B cell (primary cell): ENCODE measurements at regions of chr12 and their contacts with region 1.

Region 1: DNA sequence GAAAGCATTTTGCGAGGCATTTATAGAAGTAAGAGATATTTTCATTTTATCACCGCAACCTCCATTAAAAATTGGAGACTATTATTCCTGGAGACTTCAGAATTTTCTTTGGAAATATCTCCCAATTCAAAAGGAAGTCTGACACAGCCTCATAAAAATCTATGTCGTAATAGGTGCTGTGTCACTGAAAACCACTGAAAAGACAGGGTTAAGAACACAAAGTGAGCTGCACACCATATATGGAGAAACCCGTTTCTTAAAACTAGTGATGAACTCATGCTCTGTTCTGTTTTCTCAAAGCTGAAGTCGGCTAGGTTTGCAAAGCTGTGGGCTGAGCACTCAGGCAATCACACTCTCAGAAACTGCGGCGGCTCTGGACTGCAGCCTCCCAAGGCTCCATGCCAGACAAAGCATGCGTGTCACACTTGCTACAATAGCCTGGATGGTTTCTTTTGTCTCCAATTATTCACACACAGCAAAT is at the start of gene GLIPR1:
- DNase-seq: peak; percentile 79
- ATAC-seq: peak; percentile 82
- H3K4me3 ChIP-seq: peak within 1 kb of the TSS; percentile 66 to 98 (median 80)
- H3K4me3 Mint-ChIP-seq: peak within 1 kb of the TSS; percentile 98
- H3K27ac ChIP-seq: peak within 1 kb of the TSS; percentile 75 to 79
- H3K27ac Mint-ChIP-seq: peak within 1 kb of the TSS; percentile 99
- H3K4me1 ChIP-seq: peaks cover 61 to 64% of the 10 kb centered on the region in 2 donors
- H3K4me1 Mint-ChIP-seq: peaks cover 79% of the 10 kb centered on the region
- H3K27me3 ChIP-seq: no peaks in the 10 kb centered on the region
- H3K27me3 Mint-ChIP-seq: no peaks in the 10 kb centered on the region
- CTCF ChIP-seq: no peak
- total RNA-seq, gene GLIPR1: 117 and 119 TPM in 2 replicates

Region 2: GRCh38 chr12:75334384-75335030 is 146.0 kb before region 1 on chr12 and contains the start of gene GLIPR1L1:
- CTCF ChIA-PET with region 1: interaction called, 29 read pairs
- POLR2A ChIA-PET with region 1: no interaction called
- intact Hi-C with region 1: loop called (anchors 5 kb)
- DNase-seq: peak; percentile 86
- ATAC-seq: peak; percentile 83
- H3K4me3 ChIP-seq: peak within 1 kb of the TSS in 2 of 5 experiments; percentile 33 to 41
- H3K4me3 Mint-ChIP-seq: peak within 1 kb of the TSS; percentile 76
- H3K27ac ChIP-seq: no peak within 1 kb of the TSS
- H3K27ac Mint-ChIP-seq: no peak within 1 kb of the TSS
- H3K4me1 ChIP-seq: peaks cover 16% of the 10 kb centered on the region in 2 donors
- H3K4me1 Mint-ChIP-seq: peaks cover 18% of the 10 kb centered on the region
- H3K27me3 ChIP-seq: peaks cover 0 to 14% (median 6%) of the 10 kb centered on the region in 4 experiments
- H3K27me3 Mint-ChIP-seq: peaks cover 25% of the 10 kb centered on the region
- CTCF ChIP-seq: peak; percentile 93
- total RNA-seq, gene GLIPR1L1: not detected in 2 replicates

Region 3: DNA sequence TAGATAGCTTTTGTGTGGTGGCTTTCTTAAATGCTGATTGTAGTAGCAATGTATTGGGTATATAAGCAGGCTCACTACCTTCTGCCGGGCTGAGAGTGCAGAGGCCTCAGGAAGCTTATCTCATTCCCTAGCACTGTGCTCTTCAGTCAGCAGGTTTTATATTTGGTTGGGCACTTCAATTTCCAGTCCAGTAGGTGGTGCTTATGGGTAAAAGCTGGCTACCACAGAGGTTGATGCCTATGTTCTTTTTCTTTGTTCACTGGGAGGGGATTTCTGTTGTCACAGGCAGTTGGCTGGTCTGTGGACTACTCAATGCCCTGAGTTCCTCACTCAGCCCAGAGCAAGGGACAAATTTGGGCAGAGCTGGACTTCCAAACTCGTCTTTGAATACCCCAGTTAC is 42.9 kb before region 1 on chr12:
- CTCF ChIA-PET with region 1: interaction called, 104 read pairs
- POLR2A ChIA-PET with region 1: no interaction called
- intact Hi-C with region 1: loop called (anchors 2 kb)
- DNase-seq: peak; percentile 65
- ATAC-seq: peak; percentile 86
- H3K4me3 ChIP-seq: no peak overlapping the region
- H3K4me3 Mint-ChIP-seq: no peak overlapping the region
- H3K27ac ChIP-seq: no peak overlapping the region
- H3K27ac Mint-ChIP-seq: no peak overlapping the region
- H3K4me1 ChIP-seq: peaks cover 0 to 6% of the 10 kb centered on the region in 2 donors
- H3K4me1 Mint-ChIP-seq: peaks cover 9% of the 10 kb centered on the region
- H3K27me3 ChIP-seq: no peaks in the 10 kb centered on the region
- H3K27me3 Mint-ChIP-seq: peaks cover 7% of the 10 kb centered on the region
- CTCF ChIP-seq: peak; percentile 60

Region 4: GRCh38 chr12:75511116-75512048 is 30.9 kb after region 1 on chr12 and contains the start of gene KRR1:
- CTCF ChIA-PET with region 1: interaction called, 22 read pairs
- POLR2A ChIA-PET with region 1: interaction called, 3 read pairs
- intact Hi-C with region 1: loop called (anchors 1 kb)
- DNase-seq: peak; percentile 95
- ATAC-seq: peak; percentile 97
- H3K4me3 ChIP-seq: peak within 1 kb of the TSS; percentile 61 to 100 (median 93)
- H3K4me3 Mint-ChIP-seq: peak within 1 kb of the TSS; percentile 93
- H3K27ac ChIP-seq: peak within 1 kb of the TSS; percentile 72 to 83
- H3K27ac Mint-ChIP-seq: peak within 1 kb of the TSS; percentile 95
- H3K4me1 ChIP-seq: peaks cover 11 to 18% of the 10 kb centered on the region in 2 donors
- H3K4me1 Mint-ChIP-seq: peaks cover 28% of the 10 kb centered on the region
- H3K27me3 ChIP-seq: no peaks in the 10 kb centered on the region
- H3K27me3 Mint-ChIP-seq: no peaks in the 10 kb centered on the region
- CTCF ChIP-seq: no peak
- total RNA-seq, gene KRR1: 80.2 and 87.7 TPM in 2 replicates

Region 5: DNA sequence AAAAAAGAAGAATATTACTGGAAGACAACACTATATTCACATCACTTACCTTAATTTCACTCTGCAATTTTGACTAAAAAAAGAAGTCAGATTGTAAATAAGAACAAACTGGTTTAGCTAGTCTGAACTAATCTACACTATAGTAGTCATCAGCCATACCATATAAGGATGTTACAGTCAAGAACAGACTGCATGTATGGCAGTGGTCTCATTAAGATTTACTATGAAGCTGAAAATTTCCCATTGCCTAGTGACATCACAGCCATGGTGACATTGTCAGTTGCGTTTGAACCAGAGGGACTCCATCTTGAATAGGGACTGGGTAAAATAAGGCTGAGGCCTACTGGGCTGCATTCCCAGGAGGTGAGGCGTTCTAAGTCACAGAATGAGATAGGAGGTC is 1027.7 kb after region 1 on chr12:
- CTCF ChIA-PET with region 1: no interaction called
- POLR2A ChIA-PET with region 1: no interaction called
- intact Hi-C with region 1: loop called (anchors 2 kb)
- DNase-seq: no peak
- ATAC-seq: no peak
- H3K4me3 ChIP-seq: no peak overlapping the region
- H3K4me3 Mint-ChIP-seq: no peak overlapping the region
- H3K27ac ChIP-seq: no peak overlapping the region
- H3K27ac Mint-ChIP-seq: peak overlapping the region; percentile 26
- H3K4me1 ChIP-seq: peaks cover 16 to 29% of the 10 kb centered on the region in 2 donors
- H3K4me1 Mint-ChIP-seq: peaks cover 51% of the 10 kb centered on the region
- H3K27me3 ChIP-seq: no peaks in the 10 kb centered on the region
- H3K27me3 Mint-ChIP-seq: no peaks in the 10 kb centered on the region
- CTCF ChIP-seq: no peak

Region 6: GRCh38 chr12:76763743-76764675 is 1283.5 kb after region 1 on chr12 and contains the start of gene ZDHHC17:
- CTCF ChIA-PET with region 1: no interaction called
- POLR2A ChIA-PET with region 1: no interaction called
- intact Hi-C with region 1: loop called (anchors 2 kb)
- DNase-seq: peak; percentile 95
- ATAC-seq: peak; percentile 86
- H3K4me3 ChIP-seq: peak within 1 kb of the TSS; percentile 82 to 94 (median 92)
- H3K4me3 Mint-ChIP-seq: peak within 1 kb of the TSS; percentile 99
- H3K27ac ChIP-seq: peak within 1 kb of the TSS; percentile 94 to 96
- H3K27ac Mint-ChIP-seq: peak within 1 kb of the TSS; percentile 99
- H3K4me1 ChIP-seq: peaks cover 17 to 29% of the 10 kb centered on the region in 2 donors
- H3K4me1 Mint-ChIP-seq: peaks cover 47% of the 10 kb centered on the region
- H3K27me3 ChIP-seq: no peaks in the 10 kb centered on the region
- H3K27me3 Mint-ChIP-seq: no peaks in the 10 kb centered on the region
- CTCF ChIP-seq: no peak
- total RNA-seq, gene ZDHHC17: 75.0 and 86.7 TPM in 2 replicates